Panc1 (cell line): ENCODE measurements at regions of chrX and their contacts with region 1.

Region 1: GRCh38 chrX:85159644-85160043 is 83.9 kb downstream of the SATL1 start:
- DNase-seq: no peak
- ATAC-seq: no peak
- H3K4me3 ChIP-seq: no peak overlapping the region
- H3K27ac ChIP-seq: no peak overlapping the region
- H3K4me1 ChIP-seq: no peaks in the 10 kb centered on the region
- H3K27me3 ChIP-seq: no peaks in the 10 kb centered on the region
- CTCF ChIP-seq: no peak

Region 2: GRCh38 chrX:84047339-84047738 is 1112.3 kb before region 1 on chrX:
- CTCF ChIA-PET with region 1: no interaction called
- POLR2A ChIA-PET with region 1: no interaction called
- in situ Hi-C with region 1: no loop called
- intact Hi-C with region 1: no loop called
- DNase-seq: no peak
- ATAC-seq: no peak
- H3K4me3 ChIP-seq: no peak overlapping the region
- H3K27ac ChIP-seq: no peak overlapping the region
- H3K4me1 ChIP-seq: no peaks in the 10 kb centered on the region
- H3K27me3 ChIP-seq: no peaks in the 10 kb centered on the region
- CTCF ChIP-seq: no peak

Region 3: DNA sequence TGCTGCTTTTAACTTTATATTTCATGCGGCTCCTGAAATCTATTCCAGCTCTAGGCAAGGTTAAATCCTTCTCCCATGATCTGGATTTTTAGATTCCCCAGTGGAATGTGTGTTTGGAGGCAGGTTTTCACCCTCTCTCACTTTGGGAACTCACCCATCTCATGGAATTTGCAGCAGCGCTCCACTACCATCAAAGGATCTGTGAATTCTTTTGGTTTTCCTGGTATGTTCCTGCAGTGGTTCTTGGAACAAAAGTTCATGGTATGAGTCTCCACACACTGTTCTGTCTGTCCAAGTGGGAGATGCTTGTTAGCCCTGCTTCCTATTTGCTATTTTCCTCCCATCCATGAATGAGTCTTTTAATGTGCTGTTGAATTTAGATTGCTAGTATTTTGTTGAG is 141.9 kb before region 1 on chrX:
- CTCF ChIA-PET with region 1: no interaction called
- POLR2A ChIA-PET with region 1: no interaction called
- in situ Hi-C with region 1: no loop called
- intact Hi-C with region 1: no loop called
- DNase-seq: no peak
- ATAC-seq: no peak
- H3K4me3 ChIP-seq: no peak overlapping the region
- H3K27ac ChIP-seq: no peak overlapping the region
- H3K4me1 ChIP-seq: no peaks in the 10 kb centered on the region
- H3K27me3 ChIP-seq: no peaks in the 10 kb centered on the region
- CTCF ChIP-seq: no peak

Region 4: GRCh38 chrX:85031505-85031904 is 128.1 kb before region 1 on chrX:
- CTCF ChIA-PET with region 1: no interaction called
- POLR2A ChIA-PET with region 1: no interaction called
- in situ Hi-C with region 1: no loop called
- intact Hi-C with region 1: no loop called
- DNase-seq: no peak
- ATAC-seq: no peak
- H3K4me3 ChIP-seq: no peak overlapping the region
- H3K27ac ChIP-seq: no peak overlapping the region
- H3K4me1 ChIP-seq: no peaks in the 10 kb centered on the region
- H3K27me3 ChIP-seq: no peaks in the 10 kb centered on the region
- CTCF ChIP-seq: no peak

Region 5: DNA sequence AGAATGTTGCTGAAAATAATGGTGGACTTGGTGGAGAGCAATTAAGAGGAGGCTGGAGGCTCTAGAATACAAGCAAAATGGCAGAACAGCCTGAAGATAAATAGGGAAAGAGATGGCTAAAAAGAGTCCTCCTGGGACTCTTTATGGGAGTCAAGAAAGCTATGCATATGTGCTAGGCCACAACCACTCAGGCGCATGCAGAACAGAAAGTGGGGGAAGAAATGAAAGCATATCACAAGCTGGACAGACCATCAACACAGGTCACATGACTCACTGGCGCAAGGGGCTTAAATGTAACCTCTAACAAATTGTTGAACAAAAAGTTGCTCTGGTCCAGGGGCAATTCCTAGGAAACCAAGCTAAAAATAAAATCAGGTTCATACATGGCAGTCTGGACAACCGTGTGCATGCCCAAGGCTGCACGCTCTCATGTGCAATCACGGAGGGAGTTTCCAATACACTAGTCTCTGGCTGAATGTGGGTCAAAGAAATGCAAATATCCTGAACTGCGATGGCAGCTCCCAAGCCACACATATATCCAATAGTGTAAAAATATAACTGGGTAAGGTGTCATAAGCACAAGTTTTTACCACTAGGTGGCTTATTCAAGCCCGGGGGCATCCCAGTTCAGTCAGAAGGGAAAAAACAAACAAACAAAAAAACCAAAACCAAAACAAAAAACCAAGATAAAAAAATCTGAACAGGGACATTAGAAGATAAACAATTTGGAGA is 129.5 kb after region 1 on chrX:
- CTCF ChIA-PET with region 1: no interaction called
- POLR2A ChIA-PET with region 1: no interaction called
- in situ Hi-C with region 1: no loop called
- intact Hi-C with region 1: no loop called
- DNase-seq: no peak
- ATAC-seq: no peak
- H3K4me3 ChIP-seq: no peak overlapping the region
- H3K27ac ChIP-seq: no peak overlapping the region
- H3K4me1 ChIP-seq: no peaks in the 10 kb centered on the region
- H3K27me3 ChIP-seq: no peaks in the 10 kb centered on the region
- CTCF ChIP-seq: no peak

Region 6: GRCh38 chrX:87003031-87003430 is 1843.4 kb after region 1 on chrX:
- CTCF ChIA-PET with region 1: no interaction called
- POLR2A ChIA-PET with region 1: interaction called, 11 read pairs
- in situ Hi-C with region 1: no loop called
- intact Hi-C with region 1: no loop called
- DNase-seq: no peak
- ATAC-seq: no peak
- H3K4me3 ChIP-seq: no peak overlapping the region
- H3K27ac ChIP-seq: no peak overlapping the region
- H3K4me1 ChIP-seq: no peaks in the 10 kb centered on the region
- H3K27me3 ChIP-seq: no peaks in the 10 kb centered on the region
- CTCF ChIP-seq: no peak